Activated CD4-positive, alpha-beta memory T cell treated with anti-CD3 and anti-CD28 coated beads for 36 hours (primary cell): ENCODE measurements at regions of chr11 and their contacts with region 1.

Region 1: DNA sequence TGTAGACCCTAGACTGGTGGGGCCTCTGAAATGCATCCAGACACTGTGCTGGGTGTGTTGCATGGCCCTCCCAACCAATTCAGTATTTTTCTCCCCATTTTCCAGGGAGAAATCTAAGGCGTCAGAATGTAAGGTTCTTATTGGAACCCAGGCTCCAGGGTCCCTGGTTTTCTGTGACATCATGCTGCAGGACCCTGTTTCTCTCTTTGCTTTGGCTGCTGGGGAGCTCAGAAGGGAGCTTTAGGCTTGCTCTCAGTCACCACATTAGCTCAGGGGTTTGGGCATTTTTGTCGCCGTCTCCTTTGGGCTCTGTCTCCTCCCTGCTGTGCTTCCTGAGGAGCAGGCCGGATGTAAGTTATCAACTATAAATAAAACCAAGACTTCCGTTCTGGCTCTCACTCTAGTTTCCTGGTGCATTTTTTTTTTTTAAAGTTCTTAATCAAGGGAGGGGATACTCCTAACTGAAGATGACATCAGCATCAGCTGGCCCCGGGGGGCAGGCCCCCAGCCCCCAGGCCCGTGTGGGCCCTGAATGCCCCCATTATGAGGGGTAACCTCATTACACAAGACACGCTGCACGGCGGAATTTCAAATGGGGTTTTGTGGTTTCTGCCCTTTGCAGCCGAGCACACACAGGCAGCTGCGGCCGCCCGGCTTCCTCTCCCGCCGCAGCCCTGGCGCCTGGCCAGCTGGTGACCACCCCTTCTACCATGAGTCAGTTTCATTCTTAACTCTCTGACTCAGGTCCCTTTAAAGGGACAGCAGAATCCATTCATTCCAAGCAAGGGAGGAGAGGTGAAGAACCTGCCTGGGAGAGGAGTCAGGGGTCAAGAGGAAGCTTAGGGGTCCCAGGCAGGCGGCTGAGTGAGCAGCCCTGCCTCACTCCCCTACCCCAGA is 3.2 kb downstream of the MYEOV start:
- DNase-seq: peak; percentile 94
- H3K4me3 Mint-ChIP-seq: no peak overlapping the region
- H3K27ac Mint-ChIP-seq: peak overlapping the region; percentile 59
- H3K4me1 Mint-ChIP-seq: peaks cover 46% of the 10 kb centered on the region
- H3K27me3 Mint-ChIP-seq: no peaks in the 10 kb centered on the region

Region 2: DNA sequence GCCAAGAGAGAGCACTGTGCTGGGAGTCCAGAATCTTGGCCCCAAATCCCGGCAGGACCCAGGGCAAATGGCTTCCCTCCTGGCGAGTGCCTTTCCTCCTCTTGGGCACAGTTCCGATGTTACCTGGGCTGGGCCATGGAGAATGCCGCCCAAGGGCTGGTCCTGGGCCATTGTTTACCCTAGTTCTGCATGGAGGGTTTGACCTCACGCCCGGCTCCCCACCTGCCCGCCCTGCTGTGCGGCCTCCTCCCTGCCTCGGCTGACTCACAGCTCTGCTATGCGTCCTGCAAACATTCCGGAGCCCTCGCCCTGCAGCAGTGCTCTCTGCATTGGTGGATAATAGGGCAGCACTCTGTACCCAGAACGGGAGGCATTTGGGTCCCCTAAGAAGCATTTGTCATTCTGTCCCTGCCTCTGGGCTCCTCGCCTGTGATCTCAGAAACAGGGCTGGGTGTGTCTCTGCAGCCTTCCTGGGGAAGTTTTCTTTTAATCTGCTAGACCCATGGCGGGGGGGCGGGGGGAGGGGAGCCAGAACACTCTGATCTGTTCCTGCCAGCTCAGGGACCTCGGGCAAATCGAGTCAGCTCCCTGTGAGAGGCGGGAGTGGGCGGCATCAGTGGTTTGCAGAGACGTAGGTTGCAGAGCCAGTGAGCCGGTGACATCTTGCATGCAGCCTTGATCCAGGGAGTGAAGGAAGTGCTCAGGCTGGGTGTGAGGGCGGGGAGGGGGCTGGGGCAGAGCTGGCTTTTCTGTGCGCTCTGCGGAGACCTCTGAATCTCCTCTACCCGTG is 174.3 kb before region 1 on chr11:
- CTCF ChIA-PET with region 1: interaction called, 3 read pairs
- POLR2A ChIA-PET with region 1: no interaction called
- intact Hi-C with region 1: loop called (anchors 5 kb)
- DNase-seq: peak; percentile 88
- H3K4me3 Mint-ChIP-seq: peak overlapping the region; percentile 18
- H3K27ac Mint-ChIP-seq: peak overlapping the region; percentile 30
- H3K4me1 Mint-ChIP-seq: peaks cover 37% of the 10 kb centered on the region
- H3K27me3 Mint-ChIP-seq: no peaks in the 10 kb centered on the region

Region 3: GRCh38 chr11:69352715-69353325 is 55.7 kb after region 1 on chr11:
- CTCF ChIA-PET with region 1: interaction called, 4 read pairs
- POLR2A ChIA-PET with region 1: interaction called, 3 read pairs
- intact Hi-C with region 1: loop called (anchors 5 kb)
- DNase-seq: peak; percentile 69
- H3K4me3 Mint-ChIP-seq: no peak overlapping the region
- H3K27ac Mint-ChIP-seq: no peak overlapping the region
- H3K4me1 Mint-ChIP-seq: peaks cover 6% of the 10 kb centered on the region
- H3K27me3 Mint-ChIP-seq: peaks cover 8% of the 10 kb centered on the region

Region 4: GRCh38 chr11:69546735-69547370 is 249.7 kb after region 1 on chr11:
- CTCF ChIA-PET with region 1: interaction called, 7 read pairs
- POLR2A ChIA-PET with region 1: interaction called, 5 read pairs
- intact Hi-C with region 1: loop called (anchors 1 kb)
- DNase-seq: peak; percentile 80
- H3K4me3 Mint-ChIP-seq: peak overlapping the region; percentile 9
- H3K27ac Mint-ChIP-seq: peak overlapping the region; percentile 82
- H3K4me1 Mint-ChIP-seq: peaks cover 26% of the 10 kb centered on the region
- H3K27me3 Mint-ChIP-seq: peaks cover 51% of the 10 kb centered on the region

Region 5: GRCh38 chr11:69670158-69670845 is 373.2 kb after region 1 on chr11:
- CTCF ChIA-PET with region 1: interaction called, 12 read pairs
- POLR2A ChIA-PET with region 1: no interaction called
- intact Hi-C with region 1: no loop called
- DNase-seq: peak; percentile 70
- H3K4me3 Mint-ChIP-seq: no peak overlapping the region
- H3K27ac Mint-ChIP-seq: peak overlapping the region; percentile 16
- H3K4me1 Mint-ChIP-seq: peaks cover 24% of the 10 kb centered on the region
- H3K27me3 Mint-ChIP-seq: no peaks in the 10 kb centered on the region